ENCODE measurements at regions of chr9 and their contacts with region 1.

Region 1: GRCh38 chr9:121267689-121268597 is at the start of gene GSN:
- DNase-seq: peak in 12 of 14 experiments; percentile 13 to 61 (median 48)
- ATAC-seq: peak; percentile 88
- H3K4me3 ChIP-seq: peak within 1 kb of the TSS; percentile 69
- H3K4me3 Mint-ChIP-seq: peak within 1 kb of the TSS; percentile 88
- H3K27ac ChIP-seq: no peak within 1 kb of the TSS
- H3K27ac Mint-ChIP-seq: no peak within 1 kb of the TSS
- H3K4me1 ChIP-seq: peaks cover 19% of the 10 kb centered on the region
- H3K4me1 Mint-ChIP-seq: peaks cover 12% of the 10 kb centered on the region
- H3K27me3 ChIP-seq: peaks cover 0 to 12% of the 10 kb centered on the region in 2 experiments
- H3K27me3 Mint-ChIP-seq: peaks cover 12% of the 10 kb centered on the region
- CTCF ChIP-seq: no peak
- total RNA-seq, gene GSN: 2.6 to 2.7 TPM

Region 2: GRCh38 chr9:121278535-121279261 is 10.8 kb after region 1 on chr9:
- CTCF ChIA-PET with region 1: interaction called, 11 read pairs
- POLR2A ChIA-PET with region 1: no interaction called
- intact Hi-C with region 1: no loop called
- DNase-seq: peak in 7 of 14 experiments; percentile 15 to 66 (median 26)
- ATAC-seq: peak; percentile 83
- H3K4me3 ChIP-seq: no peak overlapping the region
- H3K4me3 Mint-ChIP-seq: no peak overlapping the region
- H3K27ac ChIP-seq: no peak overlapping the region
- H3K27ac Mint-ChIP-seq: no peak overlapping the region
- H3K4me1 ChIP-seq: peaks cover 3% of the 10 kb centered on the region
- H3K4me1 Mint-ChIP-seq: no peaks in the 10 kb centered on the region
- H3K27me3 ChIP-seq: no peaks in the 10 kb centered on the region
- H3K27me3 Mint-ChIP-seq: no peaks in the 10 kb centered on the region
- CTCF ChIP-seq: peak; percentile 44